ENCODE measurements at regions of chr10 and their contacts with region 1.

Region 1: GRCh38 chr10:89207181-89207800 is at the start of gene CH25H:
- DNase-seq: peak; percentile 42
- H3K4me3 Mint-ChIP-seq: peak within 1 kb of the TSS; percentile 71
- H3K27ac Mint-ChIP-seq: peak within 1 kb of the TSS; percentile 2
- H3K4me1 Mint-ChIP-seq: peaks cover 22% of the 10 kb centered on the region
- H3K27me3 Mint-ChIP-seq: peaks cover 32% of the 10 kb centered on the region
- total RNA-seq, gene CH25H: not detected

Region 2: GRCh38 chr10:89029785-89030437 is 177.4 kb before region 1 on chr10:
- CTCF ChIA-PET with region 1: interaction called, 49 read pairs
- POLR2A ChIA-PET with region 1: no interaction called
- DNase-seq: peak; percentile 73
- H3K4me3 Mint-ChIP-seq: no peak overlapping the region
- H3K27ac Mint-ChIP-seq: no peak overlapping the region
- H3K4me1 Mint-ChIP-seq: peaks cover 23% of the 10 kb centered on the region
- H3K27me3 Mint-ChIP-seq: no peaks in the 10 kb centered on the region